ENCODE measurements at regions of chr6 and their contacts with region 1.

Region 1: DNA sequence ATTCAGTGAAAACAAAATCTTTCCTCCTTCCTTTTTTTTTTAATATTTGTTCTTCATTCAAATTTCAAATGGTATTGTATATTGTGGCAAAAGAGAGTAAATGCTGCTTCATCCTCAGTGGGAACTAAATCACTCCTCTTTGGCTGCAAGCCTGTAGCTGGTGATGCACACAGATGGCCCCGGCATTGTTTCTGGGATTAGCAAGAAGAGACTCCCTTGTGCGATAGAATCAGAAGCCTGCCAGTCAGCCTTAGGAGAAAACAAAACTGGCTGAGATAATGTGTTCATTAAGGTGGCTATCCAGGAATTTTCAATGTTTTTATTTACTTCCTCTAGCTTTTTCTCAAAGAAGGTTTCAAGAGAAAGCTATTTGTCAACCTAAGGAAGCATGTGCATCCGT is 20.7 kb upstream of the ELOVL2 start:
- DNase-seq: no peak
- H3K27ac ChIP-seq: no peak overlapping the region
- CTCF ChIP-seq: no peak

Region 2: DNA sequence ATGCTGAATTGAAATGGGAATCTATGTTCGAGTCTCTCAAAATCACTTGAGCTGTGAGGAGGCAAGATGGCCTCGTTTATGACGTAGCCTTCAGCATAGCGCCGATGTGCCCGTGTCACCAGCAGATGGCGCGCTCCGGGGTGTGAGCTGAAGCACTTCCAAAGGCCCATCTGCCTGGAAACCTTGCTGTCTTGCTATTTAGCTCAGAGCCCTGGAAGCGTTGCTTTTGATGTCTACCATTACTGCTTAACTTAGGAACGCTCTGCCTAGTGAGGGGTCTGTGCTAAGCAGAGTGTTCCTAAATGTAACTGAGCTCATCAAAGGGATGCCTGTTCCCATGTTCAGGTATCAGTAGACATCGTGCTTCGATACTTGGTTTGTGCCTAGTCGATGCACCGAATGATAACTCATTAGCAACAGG is 110.2 kb before region 1 on chr6:
- CTCF ChIA-PET with region 1: interaction called, 15 read pairs
- POLR2A ChIA-PET with region 1: no interaction called
- DNase-seq: peak; percentile 57
- H3K27ac ChIP-seq: no peak overlapping the region
- CTCF ChIP-seq: peak; percentile 74

Region 3: GRCh38 chr6:10964684-10965083 is 100.2 kb before region 1 on chr6:
- CTCF ChIA-PET with region 1: no interaction called
- POLR2A ChIA-PET with region 1: no interaction called
- DNase-seq: no peak
- H3K27ac ChIP-seq: no peak overlapping the region
- CTCF ChIP-seq: no peak

Measured in RWPE1 (cell line).